B cell (primary cell): ENCODE measurements at regions of chr5 and their contacts with region 1.

Region 1: GRCh38 chr5:72920690-72921502 is 34.9 kb upstream of the FCHO2 start:
- DNase-seq: peak; percentile 6
- ATAC-seq: no peak
- H3K4me3 ChIP-seq: no peak overlapping the region
- H3K4me3 Mint-ChIP-seq: no peak overlapping the region
- H3K27ac ChIP-seq: no peak overlapping the region
- H3K27ac Mint-ChIP-seq: no peak overlapping the region
- H3K4me1 ChIP-seq: no peaks in the 10 kb centered on the region
- H3K4me1 Mint-ChIP-seq: no peaks in the 10 kb centered on the region
- H3K27me3 ChIP-seq: no peaks in the 10 kb centered on the region
- H3K27me3 Mint-ChIP-seq: peaks cover 3% of the 10 kb centered on the region
- CTCF ChIP-seq: no peak

Region 2: GRCh38 chr5:72908664-72909063 is 12.2 kb before region 1 on chr5:
- CTCF ChIA-PET with region 1: no interaction called
- POLR2A ChIA-PET with region 1: no interaction called
- intact Hi-C with region 1: no loop called
- DNase-seq: no peak
- ATAC-seq: no peak
- H3K4me3 ChIP-seq: no peak overlapping the region
- H3K4me3 Mint-ChIP-seq: no peak overlapping the region
- H3K27ac ChIP-seq: no peak overlapping the region
- H3K27ac Mint-ChIP-seq: no peak overlapping the region
- H3K4me1 ChIP-seq: no peaks in the 10 kb centered on the region
- H3K4me1 Mint-ChIP-seq: no peaks in the 10 kb centered on the region
- H3K27me3 ChIP-seq: no peaks in the 10 kb centered on the region
- H3K27me3 Mint-ChIP-seq: no peaks in the 10 kb centered on the region
- CTCF ChIP-seq: no peak

Region 3: DNA sequence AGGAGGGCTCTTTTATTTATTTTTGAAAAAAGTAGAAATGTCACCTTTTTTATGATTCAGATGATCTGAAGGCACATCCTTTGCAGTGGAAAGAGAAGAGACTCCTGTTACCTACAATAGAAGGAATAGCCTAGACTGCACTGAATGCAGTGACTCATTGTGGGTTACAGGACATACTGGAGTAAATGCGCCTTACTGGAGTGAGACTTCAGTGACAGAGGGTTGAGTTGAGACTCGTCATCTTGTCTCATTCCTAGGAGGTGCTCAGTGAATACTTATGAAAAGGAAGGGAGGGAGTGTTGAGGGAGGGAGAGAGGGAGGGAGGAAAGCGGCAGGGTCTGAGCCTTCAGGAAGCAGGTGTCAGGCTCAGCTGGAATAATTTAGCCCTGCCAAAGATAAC is 619.3 kb after region 1 on chr5:
- CTCF ChIA-PET with region 1: interaction called, 3 read pairs
- POLR2A ChIA-PET with region 1: no interaction called
- intact Hi-C with region 1: loop called (anchors 2 kb)
- DNase-seq: no peak
- ATAC-seq: no peak
- H3K4me3 ChIP-seq: no peak overlapping the region
- H3K4me3 Mint-ChIP-seq: no peak overlapping the region
- H3K27ac ChIP-seq: no peak overlapping the region
- H3K27ac Mint-ChIP-seq: no peak overlapping the region
- H3K4me1 ChIP-seq: no peaks in the 10 kb centered on the region
- H3K4me1 Mint-ChIP-seq: no peaks in the 10 kb centered on the region
- H3K27me3 ChIP-seq: peaks cover 0 to 6% (median 3%) of the 10 kb centered on the region in 4 experiments
- H3K27me3 Mint-ChIP-seq: peaks cover 31% of the 10 kb centered on the region
- CTCF ChIP-seq: no peak